ENCODE measurements at regions of chr2 and their contacts with region 1.

Region 1: DNA sequence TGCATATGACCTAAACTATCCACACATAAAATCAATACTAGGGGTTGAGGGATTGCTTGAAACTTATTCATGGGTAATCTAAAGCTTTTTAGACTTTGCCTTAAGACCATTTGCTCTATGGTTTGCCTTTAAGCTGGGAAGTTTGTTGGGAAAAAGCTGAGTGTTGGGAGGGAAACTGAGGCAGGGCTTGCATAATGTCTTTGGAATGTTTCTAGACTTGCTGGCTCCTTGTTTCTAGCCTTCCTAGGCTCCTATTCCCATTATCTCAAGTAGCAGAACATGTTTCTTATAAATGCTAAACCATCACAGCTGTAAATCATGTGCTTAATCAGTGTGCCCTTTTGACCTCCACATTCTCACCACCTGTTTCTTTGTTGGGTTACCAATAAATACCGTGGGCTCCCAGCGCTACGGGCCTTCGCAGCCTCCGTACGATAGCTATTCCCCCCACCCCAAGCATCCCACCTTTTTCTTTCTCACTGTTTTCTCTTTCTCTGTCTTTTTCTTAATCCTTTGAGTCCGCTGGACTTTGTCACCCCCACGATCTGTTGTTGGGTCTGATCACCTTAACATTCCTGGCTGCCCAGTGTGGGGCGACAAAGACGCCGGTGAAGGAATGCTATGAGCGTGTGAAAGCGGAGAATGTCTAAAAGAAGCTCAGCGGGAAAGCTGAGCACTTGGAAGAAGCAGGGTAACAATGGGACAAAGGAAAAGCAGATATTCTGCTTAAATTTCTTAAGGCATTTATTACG is 49.4 kb upstream of the CWC22 start:
- DNase-seq: peak in 1 of 2 experiments; percentile 70
- H3K4me3 ChIP-seq: peak overlapping the region in 1 of 4 experiments; percentile 43; a peak in 1 of 8 replicates
- H3K27ac ChIP-seq: peak overlapping the region; percentile 93
- H3K4me1 ChIP-seq: peaks cover 5 to 23% (median 18%) of the 10 kb centered on the region in 4 experiments
- H3K27me3 ChIP-seq: no peaks in the 10 kb centered on the region
- CTCF ChIP-seq: no peak
- EP300 ChIP-seq: peak in 1 of 2 experiments; percentile 89; a peak in 2 of 3 replicates
- POLR2A ChIP-seq: no peak
- RAD21 ChIP-seq: peak in 1 of 2 experiments; percentile 31; a peak in 2 of 4 replicates

Region 2: GRCh38 chr2:180006781-180007579 is 49.6 kb before region 1 on chr2 and contains the start of gene CWC22:
- CTCF ChIA-PET with region 1: no interaction called
- POLR2A ChIA-PET with region 1: interaction called, 13 read pairs
- DNase-seq: peak in 1 of 2 experiments; percentile 81
- H3K4me3 ChIP-seq: peak within 1 kb of the TSS; percentile 57 to 99 (median 95)
- H3K27ac ChIP-seq: peak within 1 kb of the TSS; percentile 97
- H3K4me1 ChIP-seq: peaks cover 0 to 4% (median 2%) of the 10 kb centered on the region in 4 experiments; a peak in 3 of 7 replicates
- H3K27me3 ChIP-seq: no peaks in the 10 kb centered on the region
- CTCF ChIP-seq: no peak
- EP300 ChIP-seq: no peak
- POLR2A ChIP-seq: peak in 1 of 2 experiments; percentile 86; a peak in 2 of 3 replicates
- RAD21 ChIP-seq: no peak
- total RNA-seq, gene CWC22: 30.2 and 34.0 TPM in 2 replicates

Region 3: DNA sequence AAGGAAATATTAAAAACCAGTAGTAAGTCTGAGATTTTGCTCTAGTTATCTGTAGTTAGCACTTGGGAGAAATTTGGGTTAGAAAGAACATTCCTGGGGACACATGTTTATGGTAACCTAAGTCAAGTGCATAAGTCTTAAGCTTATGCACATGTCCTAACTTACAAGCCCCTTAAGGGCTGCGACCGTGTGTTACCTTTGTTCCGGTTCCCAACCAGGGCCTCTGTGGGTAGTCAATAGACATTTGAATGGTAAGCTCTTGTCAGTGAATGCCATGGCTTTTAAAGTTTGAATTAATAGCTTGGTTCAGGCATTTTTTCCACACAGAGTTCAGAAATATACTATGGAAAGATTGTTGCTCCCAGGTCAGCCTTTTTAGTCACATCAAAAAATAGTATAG is 15.3 kb after region 1 on chr2:
- CTCF ChIA-PET with region 1: interaction called, 19 read pairs
- POLR2A ChIA-PET with region 1: interaction called, 16 read pairs
- DNase-seq: no peak
- H3K4me3 ChIP-seq: peak overlapping the region in 1 of 4 experiments; percentile 10; a peak in 1 of 8 replicates
- H3K27ac ChIP-seq: no peak overlapping the region
- H3K4me1 ChIP-seq: peaks cover 0 to 11% (median 2%) of the 10 kb centered on the region in 4 experiments; a peak in 3 of 7 replicates
- H3K27me3 ChIP-seq: no peaks in the 10 kb centered on the region
- CTCF ChIP-seq: no peak
- EP300 ChIP-seq: no peak
- POLR2A ChIP-seq: no peak
- RAD21 ChIP-seq: no peak